ENCODE measurements at regions of chr19 and their contacts with region 1.

Region 1: DNA sequence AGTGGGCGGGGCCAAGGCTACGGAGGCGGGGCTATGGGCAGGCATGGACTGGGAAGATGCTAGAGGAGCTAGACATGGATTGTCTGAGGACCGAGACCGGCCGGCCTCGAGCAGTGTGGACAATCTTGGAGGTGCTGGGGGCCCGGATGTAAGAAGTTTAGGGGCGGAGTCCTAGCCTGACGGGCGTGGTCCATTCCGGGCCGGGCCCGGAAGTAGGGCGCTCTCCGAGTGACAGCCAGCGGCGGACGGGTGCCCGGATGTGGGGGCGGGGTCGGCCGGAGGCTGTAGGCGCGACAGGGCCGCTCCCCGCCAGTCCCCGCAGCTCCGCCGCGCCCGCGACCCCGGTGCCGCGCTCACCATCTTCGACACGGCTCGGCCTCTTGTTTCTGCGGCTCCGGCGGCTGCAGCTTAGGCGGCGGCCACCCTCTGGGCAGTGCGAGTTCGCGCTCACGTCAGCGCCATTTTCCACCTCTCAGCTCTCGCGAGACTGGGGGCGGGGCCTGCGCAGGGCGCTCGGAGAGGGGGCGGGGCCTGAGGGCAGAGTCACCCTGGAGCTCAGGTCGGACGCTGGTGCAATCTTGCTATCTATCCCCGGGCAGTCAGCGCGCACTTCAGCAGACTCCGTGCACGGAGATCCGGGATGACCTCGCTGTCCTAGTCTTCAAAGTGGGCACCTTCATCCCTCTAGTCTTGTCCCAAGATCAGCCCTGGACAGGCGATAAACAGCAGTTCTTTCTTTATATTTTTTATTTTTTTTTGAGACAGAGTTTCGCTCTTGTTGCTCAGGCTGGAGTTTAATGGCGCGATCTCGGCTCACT is at the start of gene ZNF414:
- DNase-seq: peak; percentile 91 to 99 (median 97)
- ATAC-seq: peak; percentile 68
- H3K4me3 ChIP-seq: peak within 1 kb of the TSS; percentile 51
- H3K4me3 Mint-ChIP-seq: peak within 1 kb of the TSS; percentile 91
- H3K27ac ChIP-seq: peak within 1 kb of the TSS; percentile 84 to 97
- H3K27ac Mint-ChIP-seq: peak within 1 kb of the TSS; percentile 100
- H3K4me1 ChIP-seq: peaks cover 68% of the 10 kb centered on the region
- H3K4me1 Mint-ChIP-seq: peaks cover 61% of the 10 kb centered on the region
- H3K27me3 ChIP-seq: no peaks in the 10 kb centered on the region
- H3K27me3 Mint-ChIP-seq: no peaks in the 10 kb centered on the region
- CTCF ChIP-seq: no peak
- total RNA-seq, gene ZNF414: 36.3 to 38.0 TPM

Region 2: DNA sequence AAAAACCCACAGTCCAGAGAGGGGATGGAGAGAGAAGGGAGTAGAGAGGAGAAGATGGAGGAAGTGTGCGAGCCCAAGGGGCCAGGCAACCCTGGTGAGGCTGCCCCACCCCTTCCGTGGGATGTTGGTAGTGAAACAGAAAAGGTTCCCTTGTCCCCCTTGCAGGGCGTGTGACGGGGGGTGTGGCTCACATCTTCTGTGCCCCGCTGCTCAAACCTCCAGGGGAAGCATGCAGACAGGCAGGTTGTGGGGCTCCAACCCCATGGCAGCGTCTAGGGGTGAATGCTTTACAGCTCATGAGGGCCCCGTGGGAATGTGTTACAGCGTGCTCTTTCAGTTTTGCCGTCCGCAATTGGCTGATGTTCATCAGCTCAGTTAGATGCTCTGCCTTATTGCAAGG is 698.6 kb before region 1 on chr19:
- CTCF ChIA-PET with region 1: no interaction called
- POLR2A ChIA-PET with region 1: no interaction called
- intact Hi-C with region 1: no loop called
- DNase-seq: peak in 5 of 14 experiments; percentile 18 to 46 (median 32)
- ATAC-seq: peak; percentile 59
- H3K4me3 ChIP-seq: no peak overlapping the region
- H3K4me3 Mint-ChIP-seq: peak overlapping the region; percentile 81
- H3K27ac ChIP-seq: no peak overlapping the region
- H3K27ac Mint-ChIP-seq: peak overlapping the region; percentile 55
- H3K4me1 ChIP-seq: peaks cover 16% of the 10 kb centered on the region
- H3K4me1 Mint-ChIP-seq: peaks cover 13% of the 10 kb centered on the region
- H3K27me3 ChIP-seq: peaks cover 0 to 3% of the 10 kb centered on the region in 2 experiments
- H3K27me3 Mint-ChIP-seq: peaks cover 11% of the 10 kb centered on the region
- CTCF ChIP-seq: no peak

Region 3: DNA sequence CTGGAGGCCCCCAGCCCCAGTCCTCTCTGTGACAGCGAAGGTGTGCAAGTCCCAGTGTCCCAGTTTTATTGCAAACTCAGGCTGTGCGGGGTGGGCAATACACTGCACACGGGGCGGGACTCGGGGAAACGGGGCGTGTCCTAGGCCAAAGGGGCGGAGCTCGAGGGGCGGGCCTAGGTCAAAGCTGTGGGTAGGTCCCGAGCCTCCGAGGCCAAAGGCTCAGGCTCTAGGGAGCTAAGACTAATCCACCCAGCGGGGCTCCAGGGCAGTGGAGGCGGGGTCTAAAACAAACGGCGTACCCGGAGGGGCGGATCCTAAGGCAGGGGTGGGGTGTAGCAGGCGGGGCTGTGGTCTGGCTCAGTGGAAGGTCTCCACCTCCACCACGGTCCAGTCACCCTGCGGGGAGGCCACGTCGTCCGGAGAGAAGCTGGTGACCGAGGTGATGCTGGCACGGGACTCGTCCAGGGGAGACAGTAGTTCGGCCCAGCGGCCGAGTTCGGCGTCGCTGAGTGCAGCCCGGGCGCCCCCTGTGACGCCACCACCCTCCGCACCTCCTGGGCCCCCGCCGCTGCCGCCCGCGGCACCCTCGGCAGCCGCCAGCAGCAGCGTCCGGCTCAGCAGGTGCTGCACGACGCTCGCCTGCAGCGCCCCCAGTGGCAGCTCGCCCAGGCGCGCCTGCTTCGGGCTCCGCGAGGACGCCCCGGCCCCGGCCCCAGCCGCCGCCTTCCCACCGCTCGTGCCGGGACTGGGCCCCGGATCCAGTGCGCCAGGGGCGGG is 645.0 kb before region 1 on chr19:
- CTCF ChIA-PET with region 1: no interaction called
- POLR2A ChIA-PET with region 1: no interaction called
- intact Hi-C with region 1: no loop called
- DNase-seq: peak; percentile 69 to 96 (median 84)
- ATAC-seq: peak; percentile 69
- H3K4me3 ChIP-seq: peak overlapping the region; percentile 62
- H3K4me3 Mint-ChIP-seq: peak overlapping the region; percentile 87
- H3K27ac ChIP-seq: peak overlapping the region; percentile 67 to 72
- H3K27ac Mint-ChIP-seq: peak overlapping the region; percentile 80
- H3K4me1 ChIP-seq: peaks cover 70% of the 10 kb centered on the region
- H3K4me1 Mint-ChIP-seq: peaks cover 39% of the 10 kb centered on the region
- H3K27me3 ChIP-seq: peaks cover 20 to 21% of the 10 kb centered on the region in 2 experiments
- H3K27me3 Mint-ChIP-seq: peaks cover 33% of the 10 kb centered on the region
- CTCF ChIP-seq: peak; percentile 69

Region 4: DNA sequence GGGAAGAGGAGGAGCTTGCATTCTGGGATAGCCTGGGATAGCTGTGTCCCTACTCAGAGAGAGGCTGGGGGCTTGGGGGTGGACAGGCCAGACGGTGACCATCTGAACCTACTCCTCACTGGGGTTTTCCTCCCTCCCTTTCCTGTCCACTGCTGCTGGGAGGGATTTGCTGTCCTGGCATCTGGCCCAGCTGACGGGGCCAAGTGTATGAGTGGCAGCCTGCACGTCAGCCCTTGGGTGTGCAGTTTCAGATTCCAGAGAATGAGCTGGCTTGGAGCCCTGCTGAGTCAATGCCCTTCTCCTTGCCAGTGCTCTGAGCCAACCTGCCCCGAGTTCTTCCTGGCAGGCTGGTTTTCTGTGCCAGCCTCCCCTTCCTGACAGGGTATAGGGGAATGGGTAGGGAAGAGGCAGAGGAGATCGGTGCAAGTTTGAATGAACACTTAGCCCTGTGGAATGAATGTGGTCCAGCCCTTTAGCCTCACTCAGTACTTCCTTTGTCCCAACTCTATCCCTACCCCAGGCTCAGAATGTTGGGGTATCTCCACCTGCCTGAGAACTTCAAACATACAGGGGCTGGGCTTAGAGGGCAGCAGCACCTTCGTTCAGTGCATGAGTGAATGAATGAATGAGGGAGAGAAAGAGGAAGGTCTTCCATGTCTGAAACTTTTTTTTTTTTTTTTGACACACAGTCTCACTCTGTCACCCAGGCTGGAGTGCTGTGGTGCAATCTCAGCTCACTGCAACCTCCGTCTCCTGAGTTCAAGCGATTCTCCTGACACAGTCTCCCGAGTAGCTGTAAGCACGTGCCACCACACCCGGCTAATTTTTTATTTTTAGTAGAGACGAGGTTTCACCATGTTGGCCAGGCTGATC is 151.7 kb before region 1 on chr19:
- CTCF ChIA-PET with region 1: no interaction called
- POLR2A ChIA-PET with region 1: no interaction called
- intact Hi-C with region 1: no loop called
- DNase-seq: peak in 1 of 14 experiments; percentile 48
- ATAC-seq: no peak
- H3K4me3 ChIP-seq: no peak overlapping the region
- H3K4me3 Mint-ChIP-seq: no peak overlapping the region
- H3K27ac ChIP-seq: no peak overlapping the region
- H3K27ac Mint-ChIP-seq: no peak overlapping the region
- H3K4me1 ChIP-seq: peaks cover 18% of the 10 kb centered on the region
- H3K4me1 Mint-ChIP-seq: peaks cover 13% of the 10 kb centered on the region
- H3K27me3 ChIP-seq: peaks cover 26 to 33% of the 10 kb centered on the region in 2 experiments
- H3K27me3 Mint-ChIP-seq: peaks cover 46% of the 10 kb centered on the region
- CTCF ChIP-seq: no peak

Region 5: DNA sequence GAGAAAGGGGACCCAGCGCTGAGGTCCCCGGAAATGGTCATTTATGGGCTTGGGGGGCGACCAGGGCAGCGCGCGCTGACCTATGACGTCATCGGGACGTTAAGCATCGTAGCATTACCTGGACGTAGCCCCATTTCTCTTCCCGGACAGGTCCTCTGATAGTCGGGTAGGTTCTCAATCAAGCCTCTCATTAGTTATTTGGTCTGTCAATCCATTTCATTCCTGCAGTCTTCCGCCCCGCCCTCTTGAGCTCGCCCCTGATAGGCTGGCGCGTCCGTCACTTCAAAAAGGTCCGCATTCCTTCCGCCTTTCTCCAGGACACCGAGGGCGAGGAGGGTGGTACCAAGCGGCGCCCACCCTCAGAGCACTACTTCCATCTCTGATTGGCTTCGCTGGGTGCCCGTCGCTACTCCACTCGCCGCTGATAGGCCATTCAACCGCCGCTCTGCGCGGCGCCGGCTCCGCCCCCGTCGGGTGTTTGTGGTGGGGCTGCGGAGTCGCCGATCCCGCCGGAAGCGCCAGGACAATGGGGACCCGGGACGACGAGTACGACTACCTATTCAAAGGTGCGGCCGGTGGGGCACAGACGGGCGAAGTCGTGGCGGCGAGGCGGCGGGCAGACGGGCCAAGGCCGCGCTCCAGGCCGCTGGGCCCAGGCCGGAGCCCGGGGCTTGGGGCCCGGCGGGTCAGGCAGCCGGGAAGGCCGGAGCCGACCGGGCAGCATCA is 123.8 kb before region 1 on chr19 and contains the start of gene RAB11B:
- CTCF ChIA-PET with region 1: no interaction called
- POLR2A ChIA-PET with region 1: interaction called, 10 read pairs
- intact Hi-C with region 1: no loop called
- DNase-seq: peak; percentile 93 to 100 (median 97)
- ATAC-seq: peak; percentile 89
- H3K4me3 ChIP-seq: peak within 1 kb of the TSS; percentile 82
- H3K4me3 Mint-ChIP-seq: peak within 1 kb of the TSS; percentile 95
- H3K27ac ChIP-seq: peak within 1 kb of the TSS; percentile 91 to 92
- H3K27ac Mint-ChIP-seq: peak within 1 kb of the TSS; percentile 86
- H3K4me1 ChIP-seq: peaks cover 27% of the 10 kb centered on the region
- H3K4me1 Mint-ChIP-seq: peaks cover 28% of the 10 kb centered on the region
- H3K27me3 ChIP-seq: no peaks in the 10 kb centered on the region
- H3K27me3 Mint-ChIP-seq: no peaks in the 10 kb centered on the region
- CTCF ChIP-seq: no peak
- total RNA-seq, gene RAB11B: 66.8 to 71.5 TPM

Region 6: DNA sequence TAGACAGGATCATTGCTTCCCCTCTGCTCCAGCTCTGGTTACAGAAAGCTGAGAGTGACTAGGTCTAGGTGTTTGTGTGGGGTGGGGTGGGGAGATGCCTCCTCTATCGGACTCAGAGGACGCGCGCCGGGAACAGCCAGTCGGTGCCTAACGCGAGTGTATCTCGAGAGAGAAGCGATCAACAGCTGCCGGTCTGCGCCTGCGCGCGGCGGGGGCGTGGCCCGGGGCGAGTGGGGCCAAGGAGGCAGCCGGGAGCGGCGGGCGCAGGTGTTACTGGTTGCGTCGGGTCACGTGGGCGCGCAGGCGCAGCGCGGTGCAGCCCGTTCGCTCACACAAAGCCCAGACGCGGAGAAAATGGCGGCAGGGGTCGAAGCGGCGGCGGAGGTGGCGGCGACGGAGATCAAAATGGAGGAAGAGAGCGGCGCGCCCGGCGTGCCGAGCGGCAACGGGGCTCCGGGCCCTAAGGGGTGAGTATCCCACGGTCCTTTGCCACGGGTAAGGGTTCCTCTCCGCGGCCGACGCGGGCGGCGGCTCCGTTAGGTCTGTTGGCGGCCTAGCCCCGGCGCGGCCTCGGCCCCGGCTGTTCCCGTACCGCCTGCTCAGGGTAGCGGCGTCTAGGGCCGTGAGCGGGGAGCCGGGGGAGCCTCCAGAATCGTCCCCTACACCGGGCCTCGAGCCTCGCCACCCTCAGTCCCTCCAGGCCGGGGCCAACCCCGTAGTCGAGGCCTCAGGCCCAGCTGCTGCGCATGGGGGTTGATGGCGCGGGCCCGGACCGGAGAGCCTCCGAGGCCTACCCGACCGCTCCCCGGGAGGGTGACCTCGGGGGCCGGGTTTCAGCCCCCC is 69.0 kb before region 1 on chr19 and contains the start of gene HNRNPM:
- CTCF ChIA-PET with region 1: no interaction called
- POLR2A ChIA-PET with region 1: interaction called, 40 read pairs
- intact Hi-C with region 1: loop called in 1 of 2 experiments (anchors 1 kb)
- DNase-seq: peak; percentile 99 to 100 (median 100)
- ATAC-seq: peak; percentile 94
- H3K4me3 ChIP-seq: peak within 1 kb of the TSS; percentile 97
- H3K4me3 Mint-ChIP-seq: peak within 1 kb of the TSS; percentile 100
- H3K27ac ChIP-seq: peak within 1 kb of the TSS; percentile 86 to 93
- H3K27ac Mint-ChIP-seq: peak within 1 kb of the TSS; percentile 98
- H3K4me1 ChIP-seq: peaks cover 52% of the 10 kb centered on the region
- H3K4me1 Mint-ChIP-seq: peaks cover 47% of the 10 kb centered on the region
- H3K27me3 ChIP-seq: no peaks in the 10 kb centered on the region
- H3K27me3 Mint-ChIP-seq: no peaks in the 10 kb centered on the region
- CTCF ChIP-seq: no peak
- total RNA-seq, gene HNRNPM: 269 to 272 TPM

Region 7: DNA sequence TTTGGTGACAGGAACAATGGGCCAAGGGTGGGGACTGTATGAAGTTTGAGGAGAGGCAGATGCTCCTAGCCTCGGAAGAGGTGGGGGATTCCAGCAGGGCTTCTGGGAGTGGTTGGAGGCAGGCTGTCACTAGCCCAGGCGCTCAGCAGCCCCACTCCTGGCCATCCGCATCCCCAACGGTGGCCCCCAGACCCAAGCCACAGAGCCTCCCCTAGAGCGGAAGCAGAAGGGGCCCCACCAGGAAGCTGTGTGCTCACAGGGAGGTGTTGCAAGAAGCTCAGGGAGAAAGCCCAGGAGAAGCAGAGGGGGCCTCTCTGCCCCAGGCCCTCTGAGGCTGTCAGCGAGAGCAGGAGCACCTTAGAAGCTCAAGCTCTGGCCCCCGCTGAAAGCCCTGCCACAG is 19.7 kb before region 1 on chr19:
- CTCF ChIA-PET with region 1: no interaction called
- POLR2A ChIA-PET with region 1: interaction called, 18 read pairs
- intact Hi-C with region 1: no loop called
- DNase-seq: peak in 2 of 14 experiments; percentile 24 to 35
- ATAC-seq: peak; percentile 47
- H3K4me3 ChIP-seq: no peak overlapping the region
- H3K4me3 Mint-ChIP-seq: no peak overlapping the region
- H3K27ac ChIP-seq: peak overlapping the region in 1 of 2 donors; percentile 10
- H3K27ac Mint-ChIP-seq: peak overlapping the region; percentile 79
- H3K4me1 ChIP-seq: peaks cover 17% of the 10 kb centered on the region
- H3K4me1 Mint-ChIP-seq: peaks cover 16% of the 10 kb centered on the region
- H3K27me3 ChIP-seq: no peaks in the 10 kb centered on the region
- H3K27me3 Mint-ChIP-seq: no peaks in the 10 kb centered on the region
- CTCF ChIP-seq: no peak

Region 8: DNA sequence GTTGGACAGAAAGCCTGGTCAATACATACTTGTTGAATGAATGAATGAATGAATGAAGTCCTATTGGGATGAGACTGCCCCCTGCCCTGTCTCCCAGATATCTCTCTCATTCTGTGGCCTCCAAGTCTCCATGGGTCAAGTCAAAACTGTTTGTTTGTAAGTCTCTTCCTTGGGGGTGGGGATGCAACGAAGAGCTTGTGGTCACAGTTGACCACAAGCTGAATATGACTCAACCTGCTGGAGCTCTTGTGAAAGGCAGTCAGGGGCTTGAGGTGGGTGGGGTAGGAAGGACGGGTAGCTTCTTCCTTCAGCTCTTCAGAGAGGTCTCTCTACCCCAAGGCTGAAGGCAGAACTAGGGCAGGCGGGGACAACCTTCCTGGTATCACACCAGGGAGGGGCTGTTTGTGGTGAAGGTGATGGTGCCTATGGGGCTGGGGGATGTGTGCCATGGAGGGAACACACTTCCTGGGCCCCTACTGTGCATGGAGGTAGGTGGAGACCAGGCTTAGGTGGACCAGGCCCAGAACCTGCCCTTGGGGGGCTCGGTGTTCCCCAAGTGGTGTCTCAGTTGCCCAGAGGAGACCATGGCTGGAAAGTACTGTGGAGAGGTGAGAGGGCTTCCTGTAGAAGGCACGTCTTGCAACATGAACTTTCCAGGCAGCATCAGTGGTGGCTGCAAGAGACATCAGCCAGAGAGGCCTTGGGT is 55.3 kb after region 1 on chr19:
- CTCF ChIA-PET with region 1: no interaction called
- POLR2A ChIA-PET with region 1: interaction called, 98 read pairs
- intact Hi-C with region 1: no loop called
- DNase-seq: peak in 13 of 14 experiments; percentile 51 to 91 (median 64)
- ATAC-seq: peak; percentile 75
- H3K4me3 ChIP-seq: peak overlapping the region; percentile 32
- H3K4me3 Mint-ChIP-seq: peak overlapping the region; percentile 76
- H3K27ac ChIP-seq: peak overlapping the region; percentile 59 to 79
- H3K27ac Mint-ChIP-seq: peak overlapping the region; percentile 95
- H3K4me1 ChIP-seq: peaks cover 100% of the 10 kb centered on the region
- H3K4me1 Mint-ChIP-seq: peaks cover 63% of the 10 kb centered on the region
- H3K27me3 ChIP-seq: no peaks in the 10 kb centered on the region
- H3K27me3 Mint-ChIP-seq: no peaks in the 10 kb centered on the region
- CTCF ChIP-seq: no peak

Measured in CD4-positive, alpha-beta T cell (primary cell).